GM13977 (cell line): ENCODE measurements at regions of chr3 and their contacts with region 1.

Region 1: GRCh38 chr3:58167431-58168351 is 43.1 kb downstream of the DNASE1L3 start:
- DNase-seq: peak; percentile 85
- CTCF ChIP-seq: peak; percentile 91

Region 2: DNA sequence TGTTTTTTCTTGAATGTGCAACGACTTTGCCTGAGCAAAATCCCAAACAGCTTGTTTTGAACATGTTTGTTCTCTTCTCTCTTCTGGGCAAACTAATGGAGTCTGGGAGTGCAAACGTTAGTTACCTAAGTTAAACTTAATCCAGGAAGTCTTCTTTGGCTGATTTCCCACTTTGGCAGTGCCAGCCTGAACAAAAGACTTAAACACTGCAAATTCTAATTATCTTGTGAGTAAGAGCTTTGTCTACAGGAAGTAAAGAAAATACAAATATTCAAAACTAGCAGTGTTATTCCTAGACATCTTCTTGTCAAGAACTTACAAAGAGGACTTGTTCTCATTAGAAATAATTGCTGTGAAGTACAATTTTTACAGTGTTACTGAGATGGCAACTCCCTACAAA is 458.1 kb before region 1 on chr3:
- in situ Hi-C with region 1: no loop called
- DNase-seq: no peak
- CTCF ChIP-seq: no peak

Region 3: DNA sequence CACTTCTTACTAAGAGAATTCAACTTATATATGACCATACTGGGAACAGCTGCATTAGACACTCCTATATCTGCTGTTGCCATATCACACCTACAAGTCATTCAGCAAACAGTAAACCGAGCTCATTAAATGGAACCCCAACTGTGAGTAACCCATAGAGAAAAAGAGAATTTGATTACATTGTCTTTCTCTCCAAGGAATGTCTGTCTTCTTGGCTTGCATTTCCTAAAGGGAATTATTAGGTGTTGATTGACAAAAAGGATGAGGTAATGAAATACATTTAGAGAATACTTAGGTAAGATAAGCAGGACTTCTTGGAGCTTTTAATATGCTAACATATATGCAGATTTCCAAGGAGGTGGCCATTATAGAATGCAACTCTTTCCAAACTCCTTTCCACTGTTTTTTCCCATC is 334.8 kb before region 1 on chr3:
- in situ Hi-C with region 1: no loop called
- DNase-seq: no peak
- CTCF ChIP-seq: no peak

Region 4: DNA sequence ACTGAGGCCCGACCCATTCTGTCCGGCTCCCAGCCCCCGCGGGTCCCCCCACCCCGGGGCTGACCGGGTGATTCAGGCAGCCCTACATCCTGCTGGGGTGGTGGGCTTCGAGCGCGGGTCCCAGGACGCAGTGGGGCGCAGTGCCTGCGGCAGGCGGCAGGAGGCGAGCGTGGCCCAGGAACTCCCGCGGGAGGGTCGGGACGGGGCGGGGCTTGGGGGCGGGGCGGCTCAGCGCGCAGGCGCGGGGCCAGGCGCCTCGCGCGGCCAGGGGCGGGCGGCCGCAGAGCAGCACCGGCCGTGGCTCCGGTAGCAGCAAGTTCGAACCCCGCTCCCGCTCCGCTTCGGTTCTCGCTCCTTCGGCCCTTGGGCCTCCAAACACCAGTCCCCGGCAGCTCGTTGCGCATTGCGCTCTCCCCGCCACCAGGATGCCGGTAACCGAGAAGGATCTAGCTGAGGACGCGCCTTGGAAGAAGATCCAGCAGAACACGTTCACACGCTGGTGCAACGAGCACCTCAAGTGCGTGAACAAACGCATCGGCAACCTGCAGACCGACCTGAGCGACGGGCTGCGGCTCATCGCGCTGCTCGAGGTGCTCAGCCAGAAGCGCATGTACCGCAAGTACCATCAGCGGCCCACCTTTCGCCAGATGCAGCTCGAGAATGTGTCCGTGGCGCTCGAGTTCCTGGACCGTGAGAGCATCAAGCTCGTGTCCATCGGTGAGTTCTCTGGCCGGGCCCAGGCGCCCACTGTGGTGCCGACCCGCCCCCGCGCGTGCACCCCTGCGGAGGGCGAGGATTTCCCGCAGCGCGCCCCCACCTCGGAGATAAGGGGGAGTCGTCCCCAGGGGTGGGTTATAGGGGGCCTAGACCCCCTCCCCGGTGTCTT is 159.3 kb before region 1 on chr3 and contains the start of gene FLNB:
- in situ Hi-C with region 1: loop called (anchors 25 kb)
- DNase-seq: peak; percentile 97
- CTCF ChIP-seq: peak; percentile 96

Region 5: DNA sequence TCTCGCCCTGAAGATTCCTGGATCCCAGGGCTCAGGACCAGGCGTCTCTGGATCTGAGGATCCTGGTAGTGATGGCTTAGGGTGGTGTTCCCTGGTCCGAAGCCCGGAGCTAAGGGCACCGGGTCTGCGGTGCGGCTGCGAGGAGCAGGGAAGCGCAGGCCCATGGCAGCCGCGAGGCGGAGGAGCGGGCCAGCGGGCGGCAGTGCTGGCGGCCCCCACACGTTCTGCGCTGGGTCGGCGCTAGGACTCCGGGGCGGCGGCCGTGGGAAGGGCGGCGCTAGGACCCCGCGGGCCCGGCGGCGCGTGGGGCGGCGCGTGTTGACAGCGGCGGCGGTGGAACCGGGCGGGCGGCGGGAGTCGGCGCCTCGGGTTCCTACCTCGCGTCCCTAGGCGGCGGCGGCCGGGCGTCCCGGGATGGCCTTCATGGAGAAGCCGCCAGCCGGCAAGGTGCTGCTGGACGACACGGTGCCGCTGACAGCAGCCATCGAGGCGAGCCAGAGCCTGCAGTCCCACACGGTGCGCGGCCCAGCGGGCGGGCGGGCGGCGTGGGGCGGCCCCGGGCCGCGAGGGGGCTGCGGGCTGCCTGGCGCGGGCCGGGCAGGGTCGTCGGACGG is 165.0 kb after region 1 on chr3 and contains the start of gene PXK:
- in situ Hi-C with region 1: no loop called
- DNase-seq: peak; percentile 88
- CTCF ChIP-seq: peak; percentile 46